ENCODE measurements at regions of chr10 and their contacts with region 1.

Region 1: DNA sequence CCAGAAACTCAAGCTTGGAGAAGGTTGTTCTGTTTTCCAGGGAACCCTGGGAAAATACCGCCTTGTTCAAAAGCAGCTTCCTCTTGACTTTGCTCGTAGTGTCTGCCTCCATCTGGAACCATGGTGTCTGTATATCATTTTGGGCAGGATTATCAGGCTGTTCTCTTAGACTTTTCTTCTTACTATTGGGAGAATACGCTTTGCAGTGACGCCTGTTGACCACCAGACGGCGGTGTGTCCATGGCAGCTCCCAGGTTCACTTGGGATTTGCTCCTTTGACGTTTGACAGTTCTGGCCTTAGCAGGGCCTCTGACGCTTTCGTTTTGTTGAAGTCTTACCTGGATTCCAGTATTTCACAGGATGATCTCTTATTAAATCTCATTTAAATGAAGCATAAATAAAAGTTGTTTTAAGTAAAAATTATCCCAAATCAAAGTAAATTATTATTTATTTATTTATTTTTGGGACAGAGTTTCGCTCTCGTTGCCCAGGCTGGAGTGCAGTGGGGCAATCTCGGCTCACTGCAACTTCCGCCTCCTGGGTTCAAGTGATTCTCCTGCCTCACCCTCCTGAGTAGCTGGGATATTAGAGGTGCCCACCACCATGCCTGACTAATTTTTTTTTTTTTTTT is 41.8 kb upstream of the GJD4 start:
- DNase-seq: peak; percentile 72 to 75 (median 74)
- H3K4me3 ChIP-seq: no peak overlapping the region
- H3K27ac ChIP-seq: no peak overlapping the region
- H3K4me1 ChIP-seq: peaks cover 0 to 19% (median 16%) of the 10 kb centered on the region in 4 experiments
- H3K27me3 ChIP-seq: no peaks in the 10 kb centered on the region

Region 2: GRCh38 chr10:35218339-35218955 is 344.9 kb before region 1 on chr10:
- CTCF ChIA-PET with region 1: no interaction called
- POLR2A ChIA-PET with region 1: no interaction called
- DNase-seq: peak; percentile 88 to 95 (median 93)
- H3K4me3 ChIP-seq: no peak overlapping the region
- H3K27ac ChIP-seq: no peak overlapping the region
- H3K4me1 ChIP-seq: peaks cover 0 to 16% (median 7%) of the 10 kb centered on the region in 4 experiments
- H3K27me3 ChIP-seq: no peaks in the 10 kb centered on the region

Region 3: DNA sequence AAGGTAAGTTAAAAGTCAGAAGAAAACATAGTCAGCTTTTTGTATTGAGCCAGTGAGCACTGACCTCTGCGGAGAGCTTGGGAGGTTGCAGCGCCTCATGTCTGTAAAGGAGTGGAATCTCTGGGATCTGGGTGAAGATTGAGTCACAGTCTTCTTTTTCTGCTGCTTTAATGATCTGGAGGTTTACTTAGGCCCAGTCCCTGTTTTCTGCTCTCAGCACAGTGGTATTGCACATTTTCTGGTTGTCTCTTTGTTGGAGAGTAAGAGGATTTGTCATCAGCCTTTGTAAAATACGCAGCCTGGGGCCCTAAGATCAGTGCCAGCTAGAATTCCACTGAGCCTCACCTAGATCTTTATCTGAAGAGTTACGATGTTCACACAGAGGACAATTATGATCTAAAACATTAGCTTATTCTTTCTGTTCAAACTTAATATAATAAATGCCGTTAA is 16.5 kb before region 1 on chr10:
- CTCF ChIA-PET with region 1: interaction called, 11 read pairs
- POLR2A ChIA-PET with region 1: no interaction called
- DNase-seq: no peak
- H3K4me3 ChIP-seq: no peak overlapping the region
- H3K27ac ChIP-seq: no peak overlapping the region
- H3K4me1 ChIP-seq: no peaks in the 10 kb centered on the region
- H3K27me3 ChIP-seq: no peaks in the 10 kb centered on the region

Region 4: GRCh38 chr10:35574924-35575352 is 11.6 kb after region 1 on chr10:
- CTCF ChIA-PET with region 1: interaction called, 23 read pairs
- POLR2A ChIA-PET with region 1: no interaction called
- DNase-seq: no peak
- H3K4me3 ChIP-seq: no peak overlapping the region
- H3K27ac ChIP-seq: no peak overlapping the region
- H3K4me1 ChIP-seq: no peaks in the 10 kb centered on the region
- H3K27me3 ChIP-seq: no peaks in the 10 kb centered on the region

Region 5: DNA sequence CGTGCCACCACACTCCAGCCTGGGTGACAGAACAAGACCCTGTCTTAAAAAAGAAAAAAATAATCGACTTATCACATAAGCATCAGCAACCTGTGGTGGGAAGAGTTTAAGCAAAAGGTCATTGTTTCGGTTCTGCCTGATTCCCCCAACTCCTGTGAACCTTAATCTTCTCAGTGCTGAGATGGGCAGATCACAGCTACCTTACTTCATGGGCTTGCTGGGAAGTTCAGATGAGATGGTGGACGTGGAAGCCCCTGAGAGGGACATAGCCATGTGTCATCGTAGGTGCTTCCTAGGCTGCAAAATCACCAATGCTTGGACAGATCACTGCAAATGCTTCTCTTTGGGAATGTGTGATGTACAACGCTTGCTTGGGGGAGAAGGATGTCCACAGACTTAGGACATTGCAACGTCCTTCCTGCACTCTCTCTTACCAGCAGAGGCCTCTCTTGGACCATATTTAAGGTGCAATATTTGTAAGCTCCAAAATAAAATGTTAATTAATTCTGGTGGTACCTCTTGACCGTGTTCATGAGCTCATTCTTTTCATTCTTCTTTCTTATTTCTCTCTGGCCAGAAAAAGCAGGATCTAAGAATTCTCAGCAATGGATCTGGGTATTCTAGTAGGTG is 50.3 kb after region 1 on chr10:
- CTCF ChIA-PET with region 1: no interaction called
- POLR2A ChIA-PET with region 1: no interaction called
- DNase-seq: no peak
- H3K4me3 ChIP-seq: no peak overlapping the region
- H3K27ac ChIP-seq: no peak overlapping the region
- H3K4me1 ChIP-seq: no peaks in the 10 kb centered on the region
- H3K27me3 ChIP-seq: peaks cover 0 to 37% (median 8%) of the 10 kb centered on the region in 5 experiments